Endothelial cell of umbilical vein (primary cell): ENCODE measurements at regions of chr3 and their contacts with region 1.

Region 1: DNA sequence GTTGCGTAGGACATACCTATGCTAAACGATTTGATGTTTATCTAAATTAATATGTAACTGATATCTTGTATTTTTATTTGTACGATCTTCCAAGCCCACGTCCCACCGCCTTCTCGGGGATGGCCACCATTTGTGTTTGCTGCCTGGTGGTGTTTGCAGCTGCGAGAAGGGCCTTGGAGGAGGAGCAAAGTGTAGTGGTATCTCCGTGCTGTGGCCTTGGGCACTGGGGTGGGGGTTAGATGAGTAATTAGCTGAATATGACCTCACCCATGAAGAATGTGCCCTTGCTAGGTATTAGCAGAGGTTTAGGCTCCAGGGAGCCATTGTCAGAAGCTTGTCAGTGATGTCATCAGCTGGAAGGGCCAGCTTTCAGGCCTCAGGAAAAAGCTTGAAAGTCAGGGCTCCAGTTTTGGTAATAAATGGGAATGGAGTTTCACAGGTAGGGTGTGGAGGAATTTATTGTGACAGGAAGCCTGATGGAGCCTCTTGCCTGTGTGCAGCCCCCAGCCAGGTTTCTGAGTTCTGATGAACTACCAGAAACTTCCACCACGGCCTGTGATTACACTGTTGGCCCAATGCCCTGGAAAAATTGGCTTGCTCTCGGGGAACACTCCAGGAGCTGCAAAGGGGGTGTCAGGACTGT is 41.0 kb downstream of the FLNB start:
- DNase-seq: peak; percentile 91
- H3K4me3 ChIP-seq: peak overlapping the region in 1 of 3 experiments; percentile 31
- H3K27ac ChIP-seq: peak overlapping the region; percentile 98
- H3K4me1 ChIP-seq: peaks cover 85% of the 10 kb centered on the region
- H3K27me3 ChIP-seq: no peaks in the 10 kb centered on the region
- CTCF ChIP-seq: no peak
- POLR2A ChIP-seq: peak; percentile 49

Region 2: DNA sequence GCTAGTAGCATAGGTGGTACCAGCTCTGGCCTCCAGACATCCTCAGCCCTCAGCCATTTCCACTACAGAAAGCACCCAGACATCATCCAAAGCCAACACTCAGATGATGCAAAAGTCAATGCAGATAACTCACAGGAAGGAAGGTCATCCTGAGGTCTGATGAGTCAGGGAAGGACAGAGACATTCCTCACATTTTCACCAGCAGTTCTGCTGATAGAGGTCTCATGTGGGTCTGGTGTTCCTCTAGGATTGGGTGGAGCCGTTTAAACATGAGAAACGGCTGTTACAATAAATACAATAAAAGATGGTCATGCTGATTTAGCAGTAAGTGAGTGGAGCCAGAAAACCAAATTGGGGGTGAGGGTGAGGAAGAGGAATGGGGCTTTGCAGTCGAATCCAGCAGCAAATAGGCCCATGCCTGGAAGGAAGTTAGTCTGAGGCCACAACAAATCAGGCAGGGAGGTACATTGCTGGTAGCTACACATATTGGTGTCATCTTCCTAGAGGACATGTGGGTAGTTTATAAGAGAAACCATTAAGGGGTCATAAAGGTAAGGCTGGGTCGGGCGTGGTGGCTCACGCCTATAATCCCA is 74.4 kb before region 1 on chr3:
- CTCF ChIA-PET with region 1: no interaction called
- POLR2A ChIA-PET with region 1: no interaction called
- dilution Hi-C with region 1: no loop called
- intact Hi-C with region 1: loop called (anchors 2 kb)
- DNase-seq: peak; percentile 86
- H3K4me3 ChIP-seq: no peak overlapping the region
- H3K27ac ChIP-seq: peak overlapping the region; percentile 94
- H3K4me1 ChIP-seq: peaks cover 47% of the 10 kb centered on the region
- H3K27me3 ChIP-seq: no peaks in the 10 kb centered on the region
- CTCF ChIP-seq: no peak
- POLR2A ChIP-seq: no peak

Region 3: GRCh38 chr3:58013973-58014649 is 35.2 kb before region 1 on chr3:
- CTCF ChIA-PET with region 1: interaction called, 5 read pairs
- POLR2A ChIA-PET with region 1: interaction called, 6 read pairs
- dilution Hi-C with region 1: no loop called
- intact Hi-C with region 1: loop called (anchors 1 kb)
- DNase-seq: peak; percentile 58
- H3K4me3 ChIP-seq: peak overlapping the region in 2 of 3 experiments; percentile 2 to 19
- H3K27ac ChIP-seq: peak overlapping the region; percentile 1
- H3K4me1 ChIP-seq: peaks cover 65% of the 10 kb centered on the region
- H3K27me3 ChIP-seq: no peaks in the 10 kb centered on the region
- CTCF ChIP-seq: no peak
- POLR2A ChIP-seq: no peak

Region 4: DNA sequence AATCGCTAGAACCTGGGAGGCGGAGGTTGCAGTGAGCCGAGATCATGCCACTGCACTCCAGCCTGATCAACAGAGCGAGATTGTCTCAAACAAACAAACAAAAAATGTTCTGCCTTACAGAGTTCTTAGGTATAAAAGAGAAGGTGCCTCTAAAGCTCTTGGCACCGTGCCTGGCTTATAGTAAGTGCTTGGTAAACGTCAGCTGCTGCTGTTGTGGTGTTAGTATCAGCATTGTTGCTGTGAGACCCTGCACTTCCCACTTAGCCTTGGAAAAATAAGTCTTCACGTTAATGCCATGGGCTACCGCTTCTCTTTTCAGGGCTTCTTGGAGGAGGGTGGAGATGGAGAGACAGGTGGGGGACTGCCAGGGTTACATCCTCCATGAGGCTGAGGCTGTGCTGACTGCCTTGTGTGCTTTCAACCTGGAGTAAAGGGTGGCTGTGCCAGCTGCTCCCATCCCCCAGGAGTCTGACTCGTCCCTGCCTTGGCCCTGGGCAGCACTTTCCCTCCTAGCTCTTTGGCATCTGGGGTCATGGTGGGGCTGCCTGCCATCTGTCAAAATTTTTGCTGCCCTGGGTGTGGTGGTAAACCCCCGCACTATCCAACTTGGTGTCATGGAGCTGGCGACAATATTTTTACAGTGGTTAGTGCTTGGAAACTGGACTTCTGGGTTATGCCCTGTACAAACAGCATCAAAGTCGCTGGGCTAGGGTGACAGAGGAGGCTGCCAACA is 23.3 kb before region 1 on chr3:
- CTCF ChIA-PET with region 1: interaction called, 3 read pairs
- POLR2A ChIA-PET with region 1: interaction called, 3 read pairs
- dilution Hi-C with region 1: no loop called
- intact Hi-C with region 1: loop called (anchors 2 kb)
- DNase-seq: peak; percentile 79
- H3K4me3 ChIP-seq: no peak overlapping the region
- H3K27ac ChIP-seq: peak overlapping the region; percentile 37
- H3K4me1 ChIP-seq: peaks cover 48% of the 10 kb centered on the region
- H3K27me3 ChIP-seq: no peaks in the 10 kb centered on the region
- CTCF ChIP-seq: no peak
- POLR2A ChIP-seq: no peak

Region 5: DNA sequence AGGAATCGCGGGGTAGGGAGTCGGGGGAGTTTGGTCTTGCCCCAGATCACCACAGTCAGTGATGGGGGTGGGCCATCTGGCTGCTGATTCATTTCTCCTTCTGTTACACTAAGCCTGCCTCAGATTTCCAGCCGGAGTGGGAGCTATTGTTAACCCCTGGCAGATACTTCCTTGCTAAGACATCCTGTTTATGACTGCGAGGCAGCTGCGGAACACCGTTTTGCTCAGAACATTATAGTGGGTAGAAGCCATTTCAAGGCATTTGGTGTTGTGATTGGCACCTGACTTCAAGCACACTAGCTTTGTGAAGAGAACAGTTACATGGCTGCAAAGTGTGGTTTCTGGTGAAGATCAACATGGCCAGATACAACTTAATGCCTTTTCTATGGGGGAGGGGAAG is 32.8 kb after region 1 on chr3:
- CTCF ChIA-PET with region 1: interaction called, 9 read pairs
- POLR2A ChIA-PET with region 1: interaction called, 19 read pairs
- dilution Hi-C with region 1: no loop called
- intact Hi-C with region 1: loop called (anchors 1 kb)
- DNase-seq: peak; percentile 99
- H3K4me3 ChIP-seq: no peak overlapping the region
- H3K27ac ChIP-seq: peak overlapping the region; percentile 93
- H3K4me1 ChIP-seq: peaks cover 62% of the 10 kb centered on the region
- H3K27me3 ChIP-seq: no peaks in the 10 kb centered on the region
- CTCF ChIP-seq: no peak
- POLR2A ChIP-seq: peak; percentile 47

Region 6: DNA sequence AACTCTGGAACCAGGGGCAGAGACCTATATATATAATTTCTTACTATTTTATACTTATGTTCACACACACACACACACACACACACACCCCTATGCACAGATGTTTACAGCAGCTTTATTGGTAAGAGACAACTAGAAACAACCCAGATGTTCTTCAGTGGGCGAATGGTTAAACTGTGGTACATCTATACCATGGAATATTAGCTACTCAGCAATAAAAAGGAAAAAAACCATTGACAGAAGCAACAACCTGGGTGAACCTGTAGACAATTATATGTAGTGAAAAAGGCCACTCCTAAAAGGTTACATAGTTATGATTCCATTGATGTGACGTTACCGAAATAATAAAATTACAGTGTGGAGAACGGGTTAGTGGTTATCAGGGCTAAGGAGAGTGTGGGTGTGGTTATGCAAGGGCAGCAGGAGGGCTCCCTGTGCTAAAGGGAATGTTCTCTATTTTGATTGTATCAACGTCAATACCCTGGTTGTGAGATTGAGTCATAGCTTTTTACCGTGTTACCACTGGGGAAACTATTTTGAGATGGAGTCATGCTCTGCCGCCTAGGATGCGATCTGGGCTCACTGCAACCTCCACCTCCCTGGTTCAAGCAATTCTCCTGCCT is 44.4 kb after region 1 on chr3:
- CTCF ChIA-PET with region 1: no interaction called
- POLR2A ChIA-PET with region 1: no interaction called
- dilution Hi-C with region 1: no loop called
- intact Hi-C with region 1: no loop called
- DNase-seq: peak; percentile 49
- H3K4me3 ChIP-seq: no peak overlapping the region
- H3K27ac ChIP-seq: peak overlapping the region; percentile 35
- H3K4me1 ChIP-seq: peaks cover 6% of the 10 kb centered on the region
- H3K27me3 ChIP-seq: no peaks in the 10 kb centered on the region
- CTCF ChIP-seq: no peak
- POLR2A ChIP-seq: no peak

Region 7: GRCh38 chr3:58116161-58116955 is 67.1 kb after region 1 on chr3:
- CTCF ChIA-PET with region 1: no interaction called
- POLR2A ChIA-PET with region 1: no interaction called
- dilution Hi-C with region 1: no loop called
- intact Hi-C with region 1: loop called (anchors 2 kb)
- DNase-seq: peak; percentile 31
- H3K4me3 ChIP-seq: no peak overlapping the region
- H3K27ac ChIP-seq: peak overlapping the region; percentile 83
- H3K4me1 ChIP-seq: peaks cover 67% of the 10 kb centered on the region
- H3K27me3 ChIP-seq: no peaks in the 10 kb centered on the region
- CTCF ChIP-seq: no peak
- POLR2A ChIP-seq: no peak

Region 8: GRCh38 chr3:58167431-58168351 is 118.4 kb after region 1 on chr3:
- CTCF ChIA-PET with region 1: no interaction called
- POLR2A ChIA-PET with region 1: no interaction called
- dilution Hi-C with region 1: no loop called
- intact Hi-C with region 1: no loop called
- DNase-seq: peak; percentile 64
- H3K4me3 ChIP-seq: no peak overlapping the region
- H3K27ac ChIP-seq: no peak overlapping the region
- H3K4me1 ChIP-seq: peaks cover 22% of the 10 kb centered on the region
- H3K27me3 ChIP-seq: no peaks in the 10 kb centered on the region
- CTCF ChIP-seq: peak; percentile 90 to 93
- POLR2A ChIP-seq: no peak

Region 9: DNA sequence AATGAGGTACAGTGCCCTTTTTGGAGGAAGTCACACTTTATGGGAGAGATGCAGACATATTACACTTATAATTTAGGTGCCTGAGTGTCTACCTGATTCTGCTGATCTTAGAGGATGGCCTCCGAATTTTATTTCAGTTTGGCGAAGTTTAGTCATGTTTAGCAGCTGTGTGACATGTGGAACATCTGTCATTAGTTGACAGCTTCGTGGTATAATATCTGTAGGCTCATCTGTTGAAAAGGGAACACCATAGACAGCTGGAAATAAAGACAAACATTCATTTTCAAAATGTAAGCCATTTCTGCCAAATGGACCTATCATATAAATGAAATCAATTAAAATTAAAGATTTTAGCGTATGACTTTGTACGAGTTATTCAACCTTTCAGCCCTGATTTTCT is 835.2 kb after region 1 on chr3:
- CTCF ChIA-PET with region 1: no interaction called
- POLR2A ChIA-PET with region 1: no interaction called
- dilution Hi-C with region 1: no loop called
- intact Hi-C with region 1: no loop called
- DNase-seq: no peak
- H3K4me3 ChIP-seq: no peak overlapping the region
- H3K27ac ChIP-seq: no peak overlapping the region
- H3K4me1 ChIP-seq: peaks cover 7% of the 10 kb centered on the region
- H3K27me3 ChIP-seq: no peaks in the 10 kb centered on the region
- CTCF ChIP-seq: no peak
- POLR2A ChIP-seq: no peak